ENCODE measurements at regions of chr6 and their contacts with region 1.

Region 1: GRCh38 chr6:38212579-38212978 is 393.1 kb downstream of the ZFAND3 start:
- DNase-seq: peak in 1 of 2 experiments; percentile 38
- H3K4me3 ChIP-seq: no peak overlapping the region
- H3K27ac ChIP-seq: no peak overlapping the region
- H3K4me1 ChIP-seq: no peaks in the 10 kb centered on the region
- H3K27me3 ChIP-seq: no peaks in the 10 kb centered on the region
- CTCF ChIP-seq: no peak

Region 2: GRCh38 chr6:37903351-37904340 is 308.9 kb before region 1 on chr6:
- CTCF ChIA-PET with region 1: no interaction called
- POLR2A ChIA-PET with region 1: no interaction called
- intact Hi-C with region 1: no loop called
- DNase-seq: no peak
- H3K4me3 ChIP-seq: no peak overlapping the region
- H3K27ac ChIP-seq: no peak overlapping the region; the same call in 1 of the 2 replicates
- H3K4me1 ChIP-seq: no peaks in the 10 kb centered on the region
- H3K27me3 ChIP-seq: no peaks in the 10 kb centered on the region
- CTCF ChIP-seq: no peak

Region 3: DNA sequence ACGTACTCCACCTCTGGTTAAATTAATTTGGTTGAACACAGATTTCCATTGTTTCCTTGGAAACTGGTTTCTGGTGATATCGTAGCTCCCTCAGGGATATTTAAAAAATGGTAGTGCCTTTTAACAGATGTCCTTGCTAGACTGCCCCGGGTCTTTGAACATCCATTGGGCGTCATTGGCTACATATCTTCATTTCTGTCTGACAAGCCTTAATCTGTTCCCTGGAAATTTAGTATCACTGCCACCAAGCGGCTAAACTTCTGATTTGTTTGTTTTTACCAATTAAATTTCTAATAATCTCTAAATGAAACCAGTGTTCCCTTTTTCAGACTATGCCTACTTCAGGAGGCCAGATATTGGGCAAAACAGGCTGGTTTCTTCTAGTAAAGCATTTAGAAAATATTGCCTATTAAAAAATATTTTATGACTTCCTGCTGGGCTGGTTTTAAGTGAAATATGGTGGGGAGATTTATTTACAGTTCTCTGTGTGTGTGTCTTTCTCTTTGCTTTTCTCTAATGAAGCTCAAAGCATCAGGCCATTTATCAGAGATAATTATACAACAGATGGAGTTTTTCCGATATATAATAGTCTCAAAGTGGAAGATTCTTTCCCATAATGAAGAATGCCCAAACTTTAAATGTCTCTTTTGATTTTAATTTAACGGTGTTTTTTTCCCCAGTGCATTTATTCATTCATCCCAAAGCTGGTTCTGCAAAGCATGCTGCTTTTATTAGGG is 143.6 kb before region 1 on chr6:
- CTCF ChIA-PET with region 1: interaction called, 10 read pairs
- POLR2A ChIA-PET with region 1: no interaction called
- intact Hi-C with region 1: no loop called
- DNase-seq: no peak
- H3K4me3 ChIP-seq: no peak overlapping the region
- H3K27ac ChIP-seq: no peak overlapping the region
- H3K4me1 ChIP-seq: no peaks in the 10 kb centered on the region
- H3K27me3 ChIP-seq: no peaks in the 10 kb centered on the region
- CTCF ChIP-seq: no peak

Region 4: GRCh38 chr6:38248500-38249234 is 36.1 kb after region 1 on chr6:
- CTCF ChIA-PET with region 1: no interaction called
- POLR2A ChIA-PET with region 1: interaction called, 11 read pairs
- intact Hi-C with region 1: no loop called
- DNase-seq: peak in 1 of 2 experiments; percentile 64
- H3K4me3 ChIP-seq: 0 out of 2 replicates have a peak overlapping the region, but pooled peaks have one; percentile 15
- H3K27ac ChIP-seq: peak overlapping the region; percentile 29; the same call in 1 of the 2 replicates
- H3K4me1 ChIP-seq: no peaks in the 10 kb centered on the region
- H3K27me3 ChIP-seq: no peaks in the 10 kb centered on the region
- CTCF ChIP-seq: no peak

Region 5: DNA sequence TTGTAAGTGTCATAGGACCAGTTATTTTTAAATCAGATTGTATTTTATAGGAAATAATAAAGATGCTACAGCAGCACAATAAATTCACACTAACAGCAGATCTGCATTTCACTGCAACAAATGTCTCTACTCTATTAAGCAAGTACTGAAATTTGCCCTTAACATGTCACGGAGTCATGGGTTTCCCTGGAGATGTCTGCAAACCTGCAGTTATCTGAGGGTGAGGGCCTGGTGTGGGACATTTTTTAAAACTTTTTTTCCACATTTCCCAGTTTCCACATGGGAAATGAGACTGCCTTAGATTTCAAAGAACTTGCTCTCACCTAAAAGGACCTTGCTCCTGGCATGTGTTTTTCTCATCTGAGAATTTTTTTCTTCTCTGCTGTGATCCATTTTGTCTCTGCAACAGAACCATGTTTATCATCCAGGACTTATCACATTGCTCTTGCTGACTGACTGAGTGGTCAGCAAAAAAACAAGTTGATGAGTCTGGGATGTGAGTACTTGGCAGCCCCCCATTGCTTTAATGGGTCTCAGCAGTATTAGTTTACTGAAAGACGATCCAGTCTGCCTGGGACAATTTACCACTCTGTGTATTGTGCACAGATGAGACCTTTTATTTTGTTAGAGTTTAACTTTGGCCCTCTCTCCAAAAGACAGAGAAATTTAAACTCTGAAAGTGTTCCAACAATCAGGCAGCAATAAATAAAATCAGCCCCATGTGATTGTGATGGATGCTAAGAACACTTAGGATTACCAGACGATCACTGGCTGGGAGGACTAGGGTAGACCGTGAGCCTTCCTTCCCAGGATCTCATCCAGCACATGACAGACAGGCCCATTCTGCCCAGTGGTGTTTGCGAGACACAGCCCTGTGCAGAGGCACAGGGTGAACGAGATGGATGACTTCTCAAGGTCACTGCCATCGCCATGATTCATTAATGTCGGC is 158.3 kb after region 1 on chr6:
- CTCF ChIA-PET with region 1: no interaction called
- POLR2A ChIA-PET with region 1: no interaction called
- intact Hi-C with region 1: loop called (anchors 10 kb)
- DNase-seq: no peak
- H3K4me3 ChIP-seq: no peak overlapping the region
- H3K27ac ChIP-seq: no peak overlapping the region
- H3K4me1 ChIP-seq: no peaks in the 10 kb centered on the region
- H3K27me3 ChIP-seq: no peaks in the 10 kb centered on the region
- CTCF ChIP-seq: no peak

Measured in PC-9 (cell line).